Colonic mucosa (tissue), 4 donors: ENCODE measurements at regions of chr2 and their contacts with region 1.

Region 1: DNA sequence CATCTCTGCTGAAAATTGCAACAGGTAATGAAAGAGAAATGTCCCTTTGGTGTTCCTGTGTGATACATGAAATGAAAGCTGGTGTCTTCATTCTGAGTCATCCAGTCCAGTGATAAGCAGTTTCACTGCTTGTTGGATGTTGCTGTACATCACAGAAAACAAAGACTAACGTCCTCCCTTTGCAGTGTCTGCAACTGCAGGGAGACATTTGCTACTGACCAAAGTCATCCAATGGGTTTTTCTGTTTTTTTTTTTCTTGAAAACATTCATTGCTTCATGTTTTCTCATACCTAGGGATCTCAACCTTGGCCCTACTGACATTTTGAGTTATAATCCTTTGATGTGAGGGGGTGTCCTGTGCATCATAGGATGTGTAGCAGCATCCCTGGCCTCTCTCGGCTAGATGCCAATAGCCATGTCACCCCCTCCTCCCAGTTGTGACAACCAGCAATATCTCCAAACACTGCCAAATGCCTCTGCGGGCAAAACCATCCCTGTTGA is 63.6 kb upstream of the FZD5 start:
- DNase-seq: no peak
- H3K4me3 ChIP-seq: no peak overlapping the region
- H3K27ac ChIP-seq: peak overlapping the region; percentile 76
- H3K4me1 ChIP-seq: peaks cover 7% of the 10 kb centered on the region
- H3K27me3 ChIP-seq: no peaks in the 10 kb centered on the region
- CTCF ChIP-seq: no peak

Region 2: DNA sequence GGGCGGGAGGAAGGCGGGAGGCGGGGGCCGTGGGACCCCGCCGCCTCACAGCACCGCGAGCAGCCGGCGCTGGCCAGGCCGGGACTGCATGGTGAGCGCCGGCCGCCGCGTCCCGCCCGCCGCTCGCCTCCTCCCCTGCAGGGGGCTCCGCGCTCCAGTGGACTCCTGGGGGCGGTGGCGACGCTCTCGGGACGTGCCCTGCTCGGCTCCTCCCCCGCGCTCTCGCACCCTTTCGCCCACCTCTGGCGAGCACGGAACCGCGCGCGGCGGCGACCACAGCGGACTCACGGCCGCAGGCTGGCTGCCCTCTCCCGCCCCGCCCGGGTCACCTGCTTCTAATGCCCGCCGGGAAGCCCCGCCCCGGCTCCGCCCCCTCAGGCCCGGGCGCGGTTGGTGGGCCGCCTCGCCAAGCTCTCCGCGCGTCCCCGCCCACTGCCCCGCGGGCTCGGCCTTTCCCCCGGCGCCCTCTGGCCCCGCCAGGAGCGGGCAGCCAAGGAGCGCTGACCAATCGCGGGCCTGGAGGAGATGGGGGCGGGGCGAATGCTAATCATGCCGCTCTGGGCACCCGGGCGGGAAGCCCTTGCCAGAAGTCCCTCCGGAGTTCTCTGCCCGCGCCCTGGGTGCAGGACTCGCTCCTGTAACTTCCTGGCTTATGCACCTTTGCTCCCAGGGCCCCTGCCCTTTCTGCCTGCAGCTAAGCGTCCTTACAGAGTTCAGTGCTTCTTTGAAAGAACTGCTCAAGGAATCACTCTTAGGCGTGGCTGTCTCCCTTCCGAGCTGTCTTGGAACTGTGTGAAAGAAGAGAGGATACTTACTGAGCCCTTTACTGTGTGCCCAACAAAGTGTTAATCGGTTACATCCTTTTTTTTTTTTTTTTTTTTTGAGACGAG is 63.5 kb before region 1 on chr2 and contains the start of gene FZD5:
- intact Hi-C with region 1: loop called (anchors 5 kb)
- DNase-seq: peak; percentile 100
- H3K4me3 ChIP-seq: peak within 1 kb of the TSS; percentile 86
- H3K27ac ChIP-seq: peak within 1 kb of the TSS; percentile 93
- H3K4me1 ChIP-seq: no peaks in the 10 kb centered on the region
- H3K27me3 ChIP-seq: no peaks in the 10 kb centered on the region
- CTCF ChIP-seq: peak; percentile 41
- total RNA-seq, gene FZD5: 103 to 119 TPM